Endothelial cell of umbilical vein (primary cell): ENCODE measurements at regions of chr2 and their contacts with region 1.

Region 1: GRCh38 chr2:20015472-20016083 is 3.1 kb upstream of the MATN3 start:
- DNase-seq: peak; percentile 63
- H3K4me3 ChIP-seq: no peak overlapping the region
- H3K27ac ChIP-seq: no peak overlapping the region
- H3K4me1 ChIP-seq: peaks cover 13% of the 10 kb centered on the region
- H3K27me3 ChIP-seq: peaks cover 0 to 3% of the 10 kb centered on the region in 2 experiments
- CTCF ChIP-seq: peak; percentile 29 to 44
- POLR2A ChIP-seq: no peak

Region 2: GRCh38 chr2:19733931-19734425 is 281.6 kb before region 1 on chr2:
- CTCF ChIA-PET with region 1: no interaction called
- POLR2A ChIA-PET with region 1: no interaction called
- dilution Hi-C with region 1: no loop called
- intact Hi-C with region 1: no loop called
- DNase-seq: no peak
- H3K4me3 ChIP-seq: no peak overlapping the region
- H3K27ac ChIP-seq: no peak overlapping the region
- H3K4me1 ChIP-seq: no peaks in the 10 kb centered on the region
- H3K27me3 ChIP-seq: peaks cover 3% of the 10 kb centered on the region in 2 experiments
- CTCF ChIP-seq: no peak
- POLR2A ChIP-seq: no peak

Region 3: DNA sequence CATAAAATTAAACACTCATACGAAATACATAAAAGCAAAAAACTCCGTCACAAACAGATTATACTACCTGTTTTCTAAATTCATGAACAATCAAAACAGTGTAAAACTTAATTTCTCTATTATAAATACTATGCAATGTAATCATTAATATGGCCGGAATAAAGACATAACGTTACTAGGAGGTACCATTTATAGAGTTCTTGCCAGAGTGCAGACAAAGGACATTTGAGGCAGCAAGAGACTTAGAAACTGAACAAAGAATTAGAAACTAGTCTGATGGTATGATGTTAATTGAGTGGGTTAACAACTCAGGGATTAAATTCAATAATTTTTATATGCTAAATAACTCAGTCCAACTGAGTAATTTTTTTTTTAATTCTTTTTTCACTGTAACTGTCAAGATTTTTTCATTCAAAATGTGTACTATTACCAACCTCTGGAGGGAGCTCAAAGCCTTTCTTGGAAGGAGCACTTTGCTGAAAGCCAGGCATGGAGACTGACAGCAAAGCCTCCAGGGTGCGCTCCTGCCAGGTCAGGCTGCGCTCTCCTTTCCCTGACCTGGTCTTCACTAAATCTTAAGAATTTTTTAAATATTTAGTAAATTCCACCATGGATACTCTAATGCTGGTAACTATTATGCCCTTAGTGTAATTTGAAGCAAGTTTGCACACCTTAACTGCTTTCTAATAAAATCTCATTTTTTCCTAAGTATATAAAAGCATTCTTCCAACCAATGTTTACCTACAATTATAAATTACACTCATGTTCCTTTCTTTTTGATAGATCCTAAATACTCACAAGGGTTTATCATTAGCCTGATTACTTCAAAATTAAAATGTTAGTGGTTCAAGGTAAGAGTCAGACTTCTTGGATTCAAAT is 59.8 kb before region 1 on chr2:
- CTCF ChIA-PET with region 1: interaction called, 104 read pairs
- POLR2A ChIA-PET with region 1: no interaction called
- dilution Hi-C with region 1: no loop called
- intact Hi-C with region 1: loop called (anchors 1 kb)
- DNase-seq: peak; percentile 80
- H3K4me3 ChIP-seq: no peak overlapping the region
- H3K27ac ChIP-seq: no peak overlapping the region
- H3K4me1 ChIP-seq: no peaks in the 10 kb centered on the region
- H3K27me3 ChIP-seq: no peaks in the 10 kb centered on the region
- CTCF ChIP-seq: peak; percentile 80 to 85
- POLR2A ChIP-seq: no peak

Region 4: GRCh38 chr2:19982268-19982667 is 33.3 kb before region 1 on chr2:
- CTCF ChIA-PET with region 1: interaction called, 14 read pairs
- POLR2A ChIA-PET with region 1: no interaction called
- dilution Hi-C with region 1: no loop called
- intact Hi-C with region 1: loop called (anchors 2 kb)
- DNase-seq: peak; percentile 27
- H3K4me3 ChIP-seq: no peak overlapping the region
- H3K27ac ChIP-seq: no peak overlapping the region
- H3K4me1 ChIP-seq: peaks cover 32% of the 10 kb centered on the region
- H3K27me3 ChIP-seq: no peaks in the 10 kb centered on the region
- CTCF ChIP-seq: no peak
- POLR2A ChIP-seq: no peak

Region 5: DNA sequence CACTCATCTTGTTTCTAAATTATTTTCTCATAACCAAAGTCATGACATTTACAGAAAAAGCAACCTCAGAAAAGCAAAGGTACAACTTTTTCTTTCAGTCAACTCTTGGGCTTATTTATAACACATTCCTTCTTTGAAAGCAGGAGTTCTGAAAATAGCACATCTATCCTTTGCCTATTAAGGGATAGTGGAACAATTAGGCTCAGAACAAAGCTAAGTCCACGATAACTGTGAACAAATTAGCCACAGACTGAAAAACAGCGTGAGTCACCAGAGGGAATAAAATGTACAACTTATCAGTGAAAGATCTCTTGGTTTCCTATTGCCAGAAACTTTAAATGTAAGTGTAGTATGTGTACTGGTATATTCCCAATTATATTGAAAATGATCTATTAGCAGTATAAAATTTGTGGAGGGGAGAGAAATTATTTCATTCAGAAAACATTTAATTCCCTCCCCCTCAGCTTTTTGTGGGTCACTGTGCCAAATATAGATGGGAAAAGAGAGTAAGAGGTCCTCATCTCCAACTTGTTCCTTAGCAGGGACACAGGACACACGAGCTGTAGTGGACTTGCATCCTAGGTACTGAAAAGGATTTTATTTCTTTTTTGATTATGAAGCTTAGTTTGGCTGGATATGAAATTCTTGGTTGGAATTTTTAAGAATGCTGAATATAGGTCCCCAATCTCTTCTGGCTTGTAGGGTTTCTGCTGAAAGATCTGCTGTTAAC is 12.3 kb after region 1 on chr2:
- CTCF ChIA-PET with region 1: interaction called, 65 read pairs
- POLR2A ChIA-PET with region 1: no interaction called
- dilution Hi-C with region 1: no loop called
- intact Hi-C with region 1: no loop called
- DNase-seq: peak; percentile 89
- H3K4me3 ChIP-seq: peak overlapping the region in 1 of 3 experiments; percentile 3
- H3K27ac ChIP-seq: peak overlapping the region; percentile 74
- H3K4me1 ChIP-seq: peaks cover 21% of the 10 kb centered on the region
- H3K27me3 ChIP-seq: no peaks in the 10 kb centered on the region
- CTCF ChIP-seq: no peak
- POLR2A ChIP-seq: no peak

Region 6: GRCh38 chr2:20065885-20066602 is 50.5 kb after region 1 on chr2:
- CTCF ChIA-PET with region 1: interaction called, 14 read pairs
- POLR2A ChIA-PET with region 1: interaction called, 9 read pairs
- dilution Hi-C with region 1: no loop called
- intact Hi-C with region 1: no loop called
- DNase-seq: peak; percentile 35
- H3K4me3 ChIP-seq: no peak overlapping the region
- H3K27ac ChIP-seq: no peak overlapping the region
- H3K4me1 ChIP-seq: no peaks in the 10 kb centered on the region
- H3K27me3 ChIP-seq: peaks cover 0 to 7% of the 10 kb centered on the region in 2 experiments
- CTCF ChIP-seq: no peak
- POLR2A ChIP-seq: no peak

Region 7: GRCh38 chr2:20106746-20107145 is 91.2 kb after region 1 on chr2:
- CTCF ChIA-PET with region 1: interaction called, 33 read pairs
- POLR2A ChIA-PET with region 1: no interaction called
- dilution Hi-C with region 1: no loop called
- intact Hi-C with region 1: no loop called
- DNase-seq: peak; percentile 27
- H3K4me3 ChIP-seq: peak overlapping the region in 1 of 3 experiments; percentile 26
- H3K27ac ChIP-seq: no peak overlapping the region
- H3K4me1 ChIP-seq: no peaks in the 10 kb centered on the region
- H3K27me3 ChIP-seq: peaks cover 2 to 3% of the 10 kb centered on the region in 2 experiments
- CTCF ChIP-seq: peak; percentile 47 to 80
- POLR2A ChIP-seq: no peak